T-cell (primary cell): ENCODE measurements at regions of chr11 and their contacts with region 1.

Region 1: DNA sequence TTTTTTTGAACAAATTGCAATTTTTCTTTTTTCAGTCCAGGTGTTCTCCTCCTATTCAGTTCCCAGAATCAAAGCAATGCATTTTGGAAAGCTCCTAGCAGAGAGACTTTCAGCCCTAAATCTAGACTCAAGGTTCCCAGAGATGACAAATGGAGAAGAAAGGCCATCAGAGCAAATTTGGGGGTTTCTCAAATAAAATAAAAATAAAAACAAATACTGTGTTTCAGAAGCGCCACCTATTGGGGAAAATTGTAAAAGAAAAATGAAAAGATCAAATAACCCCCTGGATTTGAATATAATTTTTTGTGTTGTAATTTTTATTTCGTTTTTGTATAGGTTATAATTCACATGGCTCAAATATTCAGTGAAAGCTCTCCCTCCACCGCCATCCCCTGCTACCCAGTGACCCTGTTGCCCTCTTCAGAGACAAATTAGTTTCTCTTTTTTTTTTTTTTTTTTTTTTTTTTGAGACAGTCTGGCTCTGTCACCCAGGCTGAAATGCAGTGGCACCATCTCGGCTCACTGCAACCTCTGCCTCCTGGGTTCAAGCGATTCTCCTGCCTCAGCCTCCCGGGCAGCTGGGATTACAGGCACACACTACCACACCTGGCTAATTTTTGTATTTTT is 6.2 kb upstream of the UBE4A start:
- DNase-seq: peak in 2 of 35 experiments; percentile 27 to 78
- ATAC-seq: peak in 2 of 4 experiments; percentile 20 to 59
- H3K4me3 ChIP-seq: no peak overlapping the region
- H3K4me3 Mint-ChIP-seq: no peak overlapping the region
- H3K27ac ChIP-seq: peak overlapping the region; percentile 61
- H3K27ac Mint-ChIP-seq: peak overlapping the region; percentile 88 to 90
- H3K4me1 ChIP-seq: peaks cover 7 to 11% of the 10 kb centered on the region in 2 experiments
- H3K4me1 Mint-ChIP-seq: peaks cover 32 to 34% (median 33%) of the 10 kb centered on the region in 3 donors
- H3K27me3 ChIP-seq: no peaks in the 10 kb centered on the region
- H3K27me3 Mint-ChIP-seq: no peaks in the 10 kb centered on the region

Region 2: GRCh38 chr11:118295834-118296454 is 57.3 kb before region 1 on chr11:
- CTCF ChIA-PET with region 1: interaction called, 10 to 17 read pairs
- POLR2A ChIA-PET with region 1: no interaction called
- DNase-seq: peak in 27 of 35 experiments; percentile 8 to 76 (median 36)
- ATAC-seq: peak; percentile 79 to 83 (median 80)
- H3K4me3 ChIP-seq: no peak overlapping the region
- H3K4me3 Mint-ChIP-seq: no peak overlapping the region
- H3K27ac ChIP-seq: peak overlapping the region; percentile 14
- H3K27ac Mint-ChIP-seq: peak overlapping the region; percentile 79 to 80
- H3K4me1 ChIP-seq: peaks cover 0 to 8% of the 10 kb centered on the region in 2 experiments
- H3K4me1 Mint-ChIP-seq: peaks cover 21 to 22% (median 22%) of the 10 kb centered on the region in 3 donors
- H3K27me3 ChIP-seq: no peaks in the 10 kb centered on the region
- H3K27me3 Mint-ChIP-seq: no peaks in the 10 kb centered on the region

Region 3: DNA sequence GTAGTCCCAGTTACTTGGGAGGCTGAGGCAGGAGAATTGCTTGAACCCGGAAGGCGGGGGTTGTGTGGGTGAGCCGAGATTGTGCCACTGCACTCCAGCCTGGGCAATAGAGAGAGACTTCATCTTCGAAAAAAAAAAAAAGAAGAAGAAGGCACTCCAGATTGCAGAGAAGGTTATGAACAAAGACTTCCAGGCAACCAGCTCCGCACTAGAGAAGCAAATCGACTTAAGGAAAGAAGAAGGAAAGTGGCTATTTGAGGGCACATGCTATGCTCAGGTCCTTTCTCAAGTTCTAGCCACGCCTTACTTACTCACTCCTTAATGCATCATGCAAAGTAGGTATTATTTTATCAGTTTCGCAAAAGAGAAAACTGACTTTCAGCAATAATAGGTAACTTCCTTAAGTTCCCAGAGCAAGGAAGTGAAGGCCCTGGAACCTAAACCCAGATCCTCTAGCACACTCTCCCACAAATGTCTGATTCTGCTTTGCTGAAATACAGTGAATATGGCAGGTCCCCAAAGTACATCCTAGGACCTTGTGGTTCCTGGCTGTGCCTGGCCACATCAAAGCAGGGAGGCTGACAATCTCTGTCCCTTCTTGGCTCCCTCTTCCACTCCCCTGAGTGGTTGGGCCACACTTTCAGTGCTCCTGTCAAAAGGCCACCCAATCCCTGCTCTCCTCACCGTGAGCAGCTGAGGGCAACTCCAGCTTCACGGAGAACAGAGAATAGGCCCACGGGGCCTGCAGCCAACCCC is 34.4 kb before region 1 on chr11:
- CTCF ChIA-PET with region 1: interaction called, 3 to 13 read pairs
- POLR2A ChIA-PET with region 1: no interaction called
- DNase-seq: no peak
- ATAC-seq: no peak
- H3K4me3 ChIP-seq: no peak overlapping the region
- H3K4me3 Mint-ChIP-seq: peak overlapping the region in 1 of 3 donors; percentile 73
- H3K27ac ChIP-seq: peak overlapping the region; percentile 39
- H3K27ac Mint-ChIP-seq: peak overlapping the region; percentile 95 to 99
- H3K4me1 ChIP-seq: peaks cover 55 to 90% of the 10 kb centered on the region in 2 experiments
- H3K4me1 Mint-ChIP-seq: peaks cover 87 to 91% (median 89%) of the 10 kb centered on the region in 3 donors
- H3K27me3 ChIP-seq: no peaks in the 10 kb centered on the region
- H3K27me3 Mint-ChIP-seq: no peaks in the 10 kb centered on the region

Region 4: GRCh38 chr11:118366287-118366686 is 13.1 kb after region 1 on chr11:
- CTCF ChIA-PET with region 1: interaction called in 1 of 2 experiments, 6 read pairs
- POLR2A ChIA-PET with region 1: interaction called in 1 of 2 experiments, 15 read pairs
- DNase-seq: no peak
- ATAC-seq: no peak
- H3K4me3 ChIP-seq: no peak overlapping the region
- H3K4me3 Mint-ChIP-seq: no peak overlapping the region
- H3K27ac ChIP-seq: no peak overlapping the region
- H3K27ac Mint-ChIP-seq: no peak overlapping the region
- H3K4me1 ChIP-seq: peaks cover 5 to 14% of the 10 kb centered on the region in 2 experiments
- H3K4me1 Mint-ChIP-seq: peaks cover 25 to 35% (median 31%) of the 10 kb centered on the region in 3 donors
- H3K27me3 ChIP-seq: no peaks in the 10 kb centered on the region
- H3K27me3 Mint-ChIP-seq: no peaks in the 10 kb centered on the region

Region 5: DNA sequence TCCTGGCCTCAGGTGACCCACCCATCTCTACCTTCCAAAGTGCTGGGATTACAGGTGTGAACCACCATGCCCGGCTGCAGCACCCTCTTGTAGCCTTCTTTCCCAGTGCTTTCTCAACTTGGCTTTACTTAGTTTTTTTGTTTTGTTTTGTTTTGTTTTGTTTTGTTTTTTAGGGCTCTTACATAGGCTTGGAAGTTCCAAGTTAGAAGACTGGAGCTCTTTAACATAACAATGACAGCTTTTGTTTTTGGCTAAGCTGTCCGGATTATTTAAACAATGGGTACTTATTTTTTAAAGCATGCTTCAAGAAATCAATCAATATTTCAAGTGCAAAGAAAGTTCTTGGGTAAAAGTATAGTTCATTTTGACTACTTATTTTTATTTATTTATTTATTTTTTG is 109.0 kb after region 1 on chr11:
- CTCF ChIA-PET with region 1: no interaction called
- POLR2A ChIA-PET with region 1: no interaction called
- DNase-seq: no peak
- ATAC-seq: no peak
- H3K4me3 ChIP-seq: no peak overlapping the region
- H3K4me3 Mint-ChIP-seq: no peak overlapping the region
- H3K27ac ChIP-seq: no peak overlapping the region
- H3K27ac Mint-ChIP-seq: no peak overlapping the region
- H3K4me1 ChIP-seq: peaks cover 2 to 12% of the 10 kb centered on the region in 2 experiments
- H3K4me1 Mint-ChIP-seq: peaks cover 44 to 60% (median 57%) of the 10 kb centered on the region in 3 donors
- H3K27me3 ChIP-seq: no peaks in the 10 kb centered on the region
- H3K27me3 Mint-ChIP-seq: no peaks in the 10 kb centered on the region

Region 6: GRCh38 chr11:118572061-118572980 is 219.1 kb after region 1 on chr11 and contains the start of gene ARCN1:
- CTCF ChIA-PET with region 1: no interaction called
- POLR2A ChIA-PET with region 1: interaction called in 1 of 2 experiments, 18 read pairs
- DNase-seq: peak; percentile 63 to 88 (median 74)
- ATAC-seq: peak; percentile 86 to 90 (median 86)
- H3K4me3 ChIP-seq: peak within 1 kb of the TSS; percentile 97 to 100
- H3K4me3 Mint-ChIP-seq: peak within 1 kb of the TSS; percentile 90 to 96 (median 93)
- H3K27ac ChIP-seq: peak within 1 kb of the TSS; percentile 99
- H3K27ac Mint-ChIP-seq: peak within 1 kb of the TSS; percentile 95 to 97
- H3K4me1 ChIP-seq: peaks cover 20 to 22% of the 10 kb centered on the region in 2 experiments
- H3K4me1 Mint-ChIP-seq: peaks cover 50 to 52% (median 51%) of the 10 kb centered on the region in 3 donors
- H3K27me3 ChIP-seq: no peaks in the 10 kb centered on the region
- H3K27me3 Mint-ChIP-seq: no peaks in the 10 kb centered on the region
- total RNA-seq, gene ARCN1: 80.6 to 117 (median 111) TPM